ENCODE measurements at regions of chr17 and their contacts with region 1.

Region 1: GRCh38 chr17:50397111-50397918 is at the start of gene LRRC59:
- DNase-seq: peak; percentile 88
- ATAC-seq: peak; percentile 93
- H3K4me3 Mint-ChIP-seq: peak within 1 kb of the TSS; percentile 93
- H3K27ac Mint-ChIP-seq: no peak within 1 kb of the TSS
- H3K4me1 Mint-ChIP-seq: peaks cover 10% of the 10 kb centered on the region
- H3K27me3 Mint-ChIP-seq: peaks cover 7% of the 10 kb centered on the region
- CTCF ChIP-seq: peak; percentile 98
- total RNA-seq, gene LRRC59: 89.3 to 108 TPM (median 90.4 TPM) in 3 replicates

Region 2: GRCh38 chr17:50269477-50270434 is 127.6 kb before region 1 on chr17:
- CTCF ChIA-PET with region 1: interaction called, 10 read pairs
- POLR2A ChIA-PET with region 1: no interaction called
- DNase-seq: peak; percentile 81
- ATAC-seq: peak; percentile 54
- H3K4me3 Mint-ChIP-seq: no peak overlapping the region
- H3K27ac Mint-ChIP-seq: no peak overlapping the region
- H3K4me1 Mint-ChIP-seq: peaks cover 38% of the 10 kb centered on the region
- H3K27me3 Mint-ChIP-seq: peaks cover 12% of the 10 kb centered on the region
- CTCF ChIP-seq: peak; percentile 61

Region 3: GRCh38 chr17:50312308-50312707 is 85.0 kb before region 1 on chr17:
- CTCF ChIA-PET with region 1: no interaction called
- POLR2A ChIA-PET with region 1: no interaction called
- DNase-seq: no peak
- ATAC-seq: no peak
- H3K4me3 Mint-ChIP-seq: no peak overlapping the region
- H3K27ac Mint-ChIP-seq: no peak overlapping the region
- H3K4me1 Mint-ChIP-seq: peaks cover 25% of the 10 kb centered on the region
- H3K27me3 Mint-ChIP-seq: peaks cover 9% of the 10 kb centered on the region
- CTCF ChIP-seq: no peak

Region 4: DNA sequence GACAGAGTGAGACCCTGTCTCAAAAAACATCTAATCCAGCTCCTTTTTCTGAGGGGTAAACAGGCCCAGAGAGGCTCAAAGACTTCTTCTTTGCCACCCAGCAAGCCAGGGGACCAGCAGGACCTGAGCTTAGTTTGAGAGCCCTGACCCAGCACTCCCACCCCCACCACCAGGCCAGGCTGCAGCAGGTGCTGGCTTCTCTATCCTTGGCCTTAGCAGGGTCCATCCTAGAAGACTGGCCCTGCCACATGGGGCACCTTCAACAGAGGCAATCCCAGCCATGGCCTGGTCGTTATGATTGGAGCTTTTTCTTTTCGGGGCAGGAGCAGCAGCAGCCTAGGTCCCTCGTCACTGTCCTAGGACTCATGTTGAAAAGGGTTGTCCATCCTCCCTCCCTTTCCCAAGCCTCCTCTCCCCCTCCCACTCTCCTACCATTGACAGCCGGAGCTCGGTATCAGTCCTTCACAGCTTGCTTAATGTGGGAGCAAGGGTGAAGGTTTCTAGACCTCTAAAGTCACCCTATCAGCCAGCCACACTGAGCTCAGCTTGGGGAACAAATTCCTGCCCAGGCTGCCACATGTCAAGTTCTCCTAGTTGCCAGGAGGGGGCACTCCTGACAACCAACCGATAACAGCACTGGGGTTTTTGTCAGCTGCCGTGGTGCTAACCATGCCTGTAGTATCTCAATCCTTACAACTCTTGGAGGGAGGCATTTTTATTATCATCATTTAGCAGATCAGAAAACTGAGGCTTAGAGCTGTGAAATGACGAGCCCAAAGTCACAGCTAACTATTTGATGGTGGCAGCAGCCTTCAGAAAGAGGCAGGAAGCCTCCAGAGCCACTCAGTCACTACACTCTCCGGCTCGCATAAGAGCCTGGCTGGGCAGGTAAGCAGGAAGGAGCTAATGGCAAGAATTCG is 35.5 kb before region 1 on chr17:
- CTCF ChIA-PET with region 1: interaction called, 108 read pairs
- POLR2A ChIA-PET with region 1: interaction called, 3 read pairs
- DNase-seq: peak; percentile 61
- ATAC-seq: peak; percentile 43
- H3K4me3 Mint-ChIP-seq: no peak overlapping the region
- H3K27ac Mint-ChIP-seq: peak overlapping the region; percentile 91; the same call in 1 of the 2 replicates
- H3K4me1 Mint-ChIP-seq: peaks cover 36% of the 10 kb centered on the region
- H3K27me3 Mint-ChIP-seq: no peaks in the 10 kb centered on the region
- CTCF ChIP-seq: peak; percentile 60

Region 5: DNA sequence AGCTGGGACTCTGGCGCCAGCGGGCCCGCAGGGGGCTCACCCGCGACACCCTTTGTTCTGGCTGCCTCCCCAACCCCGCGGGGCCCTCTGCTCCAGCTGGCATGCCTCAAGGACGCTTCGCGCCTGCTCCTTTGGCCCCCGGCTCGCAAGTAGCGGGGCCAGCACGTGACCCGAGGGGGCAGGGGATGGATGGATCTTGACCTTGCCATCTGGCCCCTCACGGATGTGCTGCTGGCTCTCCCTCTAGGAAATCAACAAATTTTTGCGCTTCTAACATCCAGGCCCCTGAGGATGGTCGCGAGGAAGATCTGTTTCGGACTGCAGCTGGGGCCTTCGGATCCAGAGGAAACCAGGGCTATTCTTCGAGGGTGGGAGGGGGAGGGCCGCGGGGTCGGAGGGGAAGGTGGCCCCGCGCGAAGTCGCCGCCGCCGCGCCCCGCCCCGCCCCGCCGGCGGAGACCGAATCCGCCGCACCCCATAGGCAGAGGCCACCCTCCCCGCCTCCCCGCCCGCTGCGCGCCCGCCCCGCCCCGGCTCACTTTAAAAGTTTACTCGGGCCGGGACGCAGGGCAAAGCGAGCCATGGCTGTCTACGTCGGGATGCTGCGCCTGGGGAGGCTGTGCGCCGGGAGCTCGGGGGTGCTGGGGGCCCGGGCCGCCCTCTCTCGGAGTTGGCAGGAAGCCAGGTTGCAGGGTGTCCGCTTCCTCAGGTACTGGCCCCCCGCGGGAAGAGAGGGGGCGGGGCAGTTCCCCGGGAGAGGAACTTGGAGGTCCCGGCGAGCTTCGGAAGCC is 28.6 kb after region 1 on chr17 and contains the start of gene ACSF2:
- CTCF ChIA-PET with region 1: interaction called, 49 read pairs
- POLR2A ChIA-PET with region 1: interaction called, 6 read pairs
- DNase-seq: peak; percentile 64
- ATAC-seq: peak; percentile 50
- H3K4me3 Mint-ChIP-seq: peak within 1 kb of the TSS; percentile 76
- H3K27ac Mint-ChIP-seq: peak within 1 kb of the TSS; percentile 25; the same call in 1 of the 2 replicates
- H3K4me1 Mint-ChIP-seq: peaks cover 17% of the 10 kb centered on the region
- H3K27me3 Mint-ChIP-seq: peaks cover 24% of the 10 kb centered on the region
- CTCF ChIP-seq: no peak
- total RNA-seq, gene ACSF2: 19.1 to 19.9 TPM (median 19.7 TPM) in 3 replicates

Region 6: DNA sequence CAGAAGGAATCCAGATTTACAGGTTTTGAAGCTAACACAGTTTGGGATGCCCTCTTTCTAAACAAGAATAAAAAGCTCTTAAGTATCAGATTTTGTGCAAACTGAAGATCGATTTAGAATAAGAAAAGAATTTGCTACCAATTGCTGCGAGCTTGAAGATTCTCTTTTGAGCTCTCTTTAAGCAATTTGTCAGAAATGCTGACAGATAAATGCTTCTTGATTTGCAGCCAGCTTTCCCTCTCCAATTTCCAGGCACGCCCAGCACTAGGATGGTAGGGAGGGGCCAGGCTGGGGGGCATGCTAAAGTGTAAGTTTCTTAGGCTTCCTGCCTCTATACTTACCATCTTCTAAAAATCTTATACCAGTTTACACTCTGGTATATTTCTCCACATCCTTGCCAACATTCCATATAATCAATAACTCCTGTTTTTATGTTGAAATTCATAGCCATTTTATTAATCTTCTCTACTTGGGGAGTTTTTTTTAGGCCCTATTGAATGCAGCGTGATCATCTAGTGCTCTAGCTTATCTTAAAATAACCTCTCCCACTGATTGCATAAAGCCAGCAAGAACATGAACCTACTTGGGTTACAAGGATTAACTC is 46.2 kb after region 1 on chr17:
- CTCF ChIA-PET with region 1: interaction called, 24 read pairs
- POLR2A ChIA-PET with region 1: no interaction called
- DNase-seq: no peak
- ATAC-seq: no peak
- H3K4me3 Mint-ChIP-seq: no peak overlapping the region
- H3K27ac Mint-ChIP-seq: no peak overlapping the region
- H3K4me1 Mint-ChIP-seq: peaks cover 15% of the 10 kb centered on the region
- H3K27me3 Mint-ChIP-seq: no peaks in the 10 kb centered on the region
- CTCF ChIP-seq: no peak

Region 7: DNA sequence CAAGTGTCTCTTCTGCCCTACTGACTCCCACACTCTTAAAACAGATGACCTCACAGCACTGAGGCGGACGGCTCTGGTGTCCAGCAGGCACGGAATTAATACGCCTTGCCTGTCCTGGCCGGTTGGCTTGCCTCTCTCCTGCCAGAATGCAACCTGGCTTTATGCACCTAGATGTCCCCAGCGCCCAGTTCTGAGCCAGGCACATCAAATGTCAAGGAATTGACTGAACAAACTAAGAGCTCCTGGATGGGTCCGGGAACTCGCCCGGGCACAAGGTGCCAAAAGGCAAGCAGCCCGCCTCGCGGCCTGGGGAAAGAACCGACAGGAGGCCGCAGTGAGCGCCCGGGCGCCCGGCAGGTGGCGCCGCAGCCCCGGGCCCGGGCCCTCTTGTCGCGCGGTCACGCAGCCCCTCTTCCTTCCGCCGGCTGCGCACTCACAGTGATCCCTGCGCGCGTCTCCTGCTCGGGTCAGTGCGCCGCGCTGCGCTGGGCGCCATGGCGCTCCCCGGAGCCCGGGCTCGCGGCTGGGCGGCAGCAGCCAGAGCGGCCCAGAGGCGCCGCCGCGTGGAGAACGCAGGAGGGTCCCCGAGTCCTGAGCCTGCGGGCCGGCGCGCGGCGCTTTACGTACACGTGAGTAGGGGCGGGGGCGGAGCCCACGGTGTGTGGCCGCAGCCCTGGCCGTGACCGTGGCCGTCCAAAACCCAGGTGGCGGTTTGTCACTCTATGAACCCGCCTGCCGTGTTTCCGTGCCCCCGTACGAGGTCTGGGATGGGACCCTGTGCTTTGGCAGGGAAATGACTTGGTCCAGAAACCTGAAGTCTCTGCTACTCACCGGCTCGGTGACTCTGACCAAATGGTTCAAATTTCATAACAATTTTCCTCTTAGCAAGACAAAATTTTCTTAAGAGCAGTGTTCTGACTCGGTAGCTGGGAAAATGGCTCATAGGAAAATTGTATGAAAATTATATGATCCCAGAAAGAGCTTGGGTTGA is 81.4 kb after region 1 on chr17 and contains the start of gene RSAD1:
- CTCF ChIA-PET with region 1: interaction called, 42 read pairs
- POLR2A ChIA-PET with region 1: interaction called, 6 read pairs
- DNase-seq: peak; percentile 83
- ATAC-seq: peak; percentile 82
- H3K4me3 Mint-ChIP-seq: peak within 1 kb of the TSS; percentile 81
- H3K27ac Mint-ChIP-seq: peak within 1 kb of the TSS; percentile 68; the same call in 1 of the 2 replicates
- H3K4me1 Mint-ChIP-seq: peaks cover 14% of the 10 kb centered on the region
- H3K27me3 Mint-ChIP-seq: peaks cover 20% of the 10 kb centered on the region
- CTCF ChIP-seq: peak; percentile 61
- total RNA-seq, gene RSAD1: 35.1 to 41.5 TPM (median 40.5 TPM) in 3 replicates

Measured in WTC11 (cell line).